Activated CD8-positive, alpha-beta T cell treated with anti-CD3 and anti-CD28 coated beads for 36 hours (primary cell): ENCODE measurements at regions of chr14 and their contacts with region 1.

Region 1: GRCh38 chr14:23301288-23301968 is 1.2 kb downstream of the PPP1R3E start:
- DNase-seq: peak; percentile 97
- ATAC-seq: peak; percentile 81
- H3K4me3 Mint-ChIP-seq: peak overlapping the region; percentile 92
- H3K27ac Mint-ChIP-seq: peak overlapping the region; percentile 97
- H3K4me1 Mint-ChIP-seq: peaks cover 20% of the 10 kb centered on the region
- H3K27me3 Mint-ChIP-seq: peaks cover 12% of the 10 kb centered on the region
- CTCF ChIP-seq: peak; percentile 73

Region 2: GRCh38 chr14:23245282-23245681 is 56.1 kb before region 1 on chr14:
- CTCF ChIA-PET with region 1: no interaction called
- POLR2A ChIA-PET with region 1: no interaction called
- intact Hi-C with region 1: no loop called
- DNase-seq: no peak
- ATAC-seq: no peak
- H3K4me3 Mint-ChIP-seq: no peak overlapping the region
- H3K27ac Mint-ChIP-seq: no peak overlapping the region
- H3K4me1 Mint-ChIP-seq: no peaks in the 10 kb centered on the region
- H3K27me3 Mint-ChIP-seq: peaks cover 4% of the 10 kb centered on the region
- CTCF ChIP-seq: no peak

Region 3: GRCh38 chr14:23286020-23286905 is 15.2 kb before region 1 on chr14 and contains the start of gene HOMEZ:
- CTCF ChIA-PET with region 1: interaction called, 18 read pairs
- POLR2A ChIA-PET with region 1: interaction called, 32 read pairs
- intact Hi-C with region 1: no loop called
- DNase-seq: peak; percentile 99
- ATAC-seq: peak; percentile 99
- H3K4me3 Mint-ChIP-seq: peak within 1 kb of the TSS; percentile 95
- H3K27ac Mint-ChIP-seq: peak within 1 kb of the TSS; percentile 93
- H3K4me1 Mint-ChIP-seq: peaks cover 26% of the 10 kb centered on the region
- H3K27me3 Mint-ChIP-seq: no peaks in the 10 kb centered on the region
- CTCF ChIP-seq: no peak
- total RNA-seq, gene HOMEZ: 10.9 to 11.8 TPM